Esophagus muscularis mucosa (tissue), 4 donors: ENCODE measurements at regions of chr19 and their contacts with region 1.

Region 1: DNA sequence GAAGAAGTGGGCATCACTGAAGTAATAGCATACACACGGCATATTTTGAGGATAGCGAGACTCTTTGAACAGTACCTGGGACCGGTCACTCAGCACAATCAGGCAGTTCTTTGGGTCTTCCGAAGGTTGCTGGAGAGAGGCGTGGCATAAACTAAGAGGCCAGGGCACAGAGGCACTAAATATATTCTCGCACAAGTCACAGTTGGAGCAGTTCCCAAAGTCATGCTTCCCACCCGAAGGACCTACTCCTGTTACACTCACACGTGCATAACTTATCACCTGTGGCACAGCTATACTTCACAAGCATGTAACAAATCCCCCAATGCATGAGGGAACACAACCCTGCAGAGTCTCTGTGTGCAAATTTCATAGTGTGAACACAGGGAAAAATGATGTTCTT is 10.2 kb downstream of the WDR87 start:
- DNase-seq: no peak
- H3K4me3 ChIP-seq: no peak overlapping the region
- H3K27ac ChIP-seq: no peak overlapping the region
- H3K4me1 ChIP-seq: no peaks in the 10 kb centered on the region
- H3K27me3 ChIP-seq: peaks cover 0 to 19% (median 0%) of the 10 kb centered on the region in 4 donors
- CTCF ChIP-seq: no peak
- EP300 ChIP-seq: no peak
- POLR2A ChIP-seq: no peak

Region 2: GRCh38 chr19:37855098-37855497 is 41.1 kb before region 1 on chr19:
- intact Hi-C with region 1: no loop called
- DNase-seq: no peak
- H3K4me3 ChIP-seq: peak overlapping the region in 3 of 4 donors; percentile 7 to 10 (median 9)
- H3K27ac ChIP-seq: no peak overlapping the region
- H3K4me1 ChIP-seq: peaks cover 0 to 9% (median 6%) of the 10 kb centered on the region in 4 donors
- H3K27me3 ChIP-seq: peaks cover 0 to 52% (median 7%) of the 10 kb centered on the region in 4 donors
- CTCF ChIP-seq: no peak
- EP300 ChIP-seq: no peak
- POLR2A ChIP-seq: no peak

Region 3: DNA sequence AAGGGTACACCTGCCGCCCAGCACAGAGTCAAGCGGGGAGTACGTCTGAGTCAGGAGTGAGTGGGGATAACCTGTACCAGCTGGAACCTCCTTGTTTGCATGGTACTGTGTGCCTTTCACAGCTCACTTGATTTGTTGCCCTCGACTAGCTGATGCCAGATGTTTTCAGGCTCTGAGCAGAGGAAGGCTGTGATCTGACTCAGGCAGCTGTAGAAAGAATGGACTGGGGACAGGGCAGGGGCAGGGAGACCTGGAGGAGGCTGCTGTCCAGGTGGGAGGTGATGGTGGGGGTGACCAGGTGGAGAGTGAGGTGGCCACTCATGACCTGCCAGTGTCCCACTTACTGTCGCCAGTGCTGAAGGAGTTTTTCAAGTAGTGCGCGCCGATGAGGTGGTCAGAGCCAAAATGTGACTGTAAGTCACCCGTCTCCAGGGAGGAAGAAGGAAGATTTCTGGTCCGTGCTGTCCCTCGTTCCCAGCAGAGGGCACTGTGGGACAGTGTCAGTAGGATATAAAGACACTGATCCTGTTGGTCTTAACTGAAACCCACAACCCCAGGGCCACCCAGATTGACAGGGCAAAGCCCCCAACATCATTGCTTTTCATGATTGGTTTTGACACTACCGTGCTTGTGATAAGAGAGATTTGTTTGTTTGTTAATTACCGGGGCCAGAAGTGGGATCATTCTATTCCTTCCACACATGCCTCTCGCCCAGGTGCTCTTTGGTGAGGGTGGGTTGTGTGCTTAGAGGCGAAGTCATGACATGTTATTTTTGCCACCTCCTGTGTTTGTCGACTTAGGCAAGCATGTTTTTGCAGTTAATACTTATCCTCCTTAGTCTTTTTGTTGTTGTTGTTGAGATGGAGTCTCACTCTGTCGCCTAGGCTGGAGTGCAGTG is 199.5 kb after region 1 on chr19:
- intact Hi-C with region 1: loop called (anchors 5 kb)
- DNase-seq: no peak
- H3K4me3 ChIP-seq: no peak overlapping the region
- H3K27ac ChIP-seq: no peak overlapping the region
- H3K4me1 ChIP-seq: no peaks in the 10 kb centered on the region
- H3K27me3 ChIP-seq: no peaks in the 10 kb centered on the region
- CTCF ChIP-seq: peak; percentile 28 to 63 (median 44)
- EP300 ChIP-seq: no peak
- POLR2A ChIP-seq: no peak